Activated CD4-positive, alpha-beta T cell treated with anti-CD3 and anti-CD28 coated beads for 36 hours (primary cell): ENCODE measurements at regions of chr10 and their contacts with region 1.

Region 1: GRCh38 chr10:32031424-32031823 is 24.8 kb downstream of the KIF5B start:
- DNase-seq: no peak
- ATAC-seq: no peak
- H3K4me3 Mint-ChIP-seq: no peak overlapping the region
- H3K27ac Mint-ChIP-seq: no peak overlapping the region
- H3K4me1 Mint-ChIP-seq: peaks cover 2% of the 10 kb centered on the region
- H3K27me3 Mint-ChIP-seq: no peaks in the 10 kb centered on the region

Region 2: DNA sequence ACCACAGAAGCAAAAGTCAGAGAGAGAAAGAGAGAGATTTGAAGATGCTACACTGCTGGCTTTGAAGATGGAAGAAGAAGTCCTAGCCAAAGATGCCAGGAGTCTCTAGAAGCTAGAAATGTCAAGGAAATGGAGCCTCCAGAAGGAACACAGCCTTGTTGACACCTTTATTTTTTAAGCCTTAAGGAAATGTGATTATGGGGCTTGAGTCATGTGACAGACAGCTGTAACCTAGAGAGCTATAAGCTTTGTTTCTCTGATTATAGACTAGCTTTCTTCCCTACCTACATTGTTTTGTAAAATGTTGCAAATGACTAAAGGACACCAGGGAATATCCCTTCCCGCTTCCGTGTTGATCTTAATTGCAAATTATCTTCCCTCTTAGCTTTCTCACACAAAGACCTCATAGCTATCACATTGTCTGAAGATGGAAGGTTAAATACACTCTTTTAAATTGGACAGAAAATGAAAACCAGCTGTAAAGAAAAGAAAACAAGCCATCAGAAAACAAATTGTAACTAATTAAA is 302.7 kb before region 1 on chr10:
- CTCF ChIA-PET with region 1: no interaction called
- POLR2A ChIA-PET with region 1: no interaction called
- intact Hi-C with region 1: no loop called
- DNase-seq: no peak
- ATAC-seq: no peak
- H3K4me3 Mint-ChIP-seq: no peak overlapping the region
- H3K27ac Mint-ChIP-seq: no peak overlapping the region
- H3K4me1 Mint-ChIP-seq: peaks cover 4% of the 10 kb centered on the region
- H3K27me3 Mint-ChIP-seq: peaks cover 15% of the 10 kb centered on the region

Region 3: DNA sequence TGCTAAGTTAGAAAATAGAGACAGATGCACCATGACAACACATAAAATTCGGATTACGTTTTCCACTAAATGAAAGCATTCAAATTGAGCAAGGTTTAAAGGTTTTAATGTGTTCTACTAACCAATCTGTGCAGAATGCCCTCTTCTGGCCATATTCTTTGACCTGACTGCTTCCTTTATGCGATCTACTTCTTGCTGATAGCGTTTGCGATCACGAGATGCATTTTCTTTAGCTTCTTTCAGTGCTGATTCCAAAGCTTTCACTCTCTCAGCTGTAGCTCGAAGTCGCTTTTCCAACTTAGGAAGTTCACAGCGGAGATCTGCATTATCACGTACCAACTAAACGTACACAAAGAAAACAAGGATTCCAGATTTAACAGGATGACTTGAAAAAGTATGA is 14.4 kb before region 1 on chr10:
- CTCF ChIA-PET with region 1: no interaction called
- POLR2A ChIA-PET with region 1: no interaction called
- intact Hi-C with region 1: loop called in 1 of 2 experiments (anchors 2 kb)
- DNase-seq: no peak
- ATAC-seq: no peak
- H3K4me3 Mint-ChIP-seq: no peak overlapping the region
- H3K27ac Mint-ChIP-seq: peak overlapping the region; percentile 53
- H3K4me1 Mint-ChIP-seq: no peaks in the 10 kb centered on the region
- H3K27me3 Mint-ChIP-seq: no peaks in the 10 kb centered on the region

Region 4: GRCh38 chr10:32041290-32042028 is 10.0 kb after region 1 on chr10:
- CTCF ChIA-PET with region 1: interaction called, 4 read pairs
- POLR2A ChIA-PET with region 1: no interaction called
- intact Hi-C with region 1: loop called in 1 of 2 experiments (anchors 1 kb)
- DNase-seq: no peak
- ATAC-seq: no peak
- H3K4me3 Mint-ChIP-seq: no peak overlapping the region
- H3K27ac Mint-ChIP-seq: peak overlapping the region; percentile 48
- H3K4me1 Mint-ChIP-seq: peaks cover 57% of the 10 kb centered on the region
- H3K27me3 Mint-ChIP-seq: no peaks in the 10 kb centered on the region